Endothelial cell of umbilical vein (primary cell): ENCODE measurements at regions of chrX and their contacts with region 1.

Region 1: GRCh38 chrX:2696698-2697215 is 5.7 kb downstream of the CD99 start:
- DNase-seq: peak; percentile 96
- H3K4me3 ChIP-seq: peak overlapping the region in 1 of 3 experiments; percentile 49
- H3K27ac ChIP-seq: peak overlapping the region; percentile 87
- H3K4me1 ChIP-seq: peaks cover 61% of the 10 kb centered on the region
- H3K27me3 ChIP-seq: no peaks in the 10 kb centered on the region
- CTCF ChIP-seq: no peak
- POLR2A ChIP-seq: no peak

Region 2: DNA sequence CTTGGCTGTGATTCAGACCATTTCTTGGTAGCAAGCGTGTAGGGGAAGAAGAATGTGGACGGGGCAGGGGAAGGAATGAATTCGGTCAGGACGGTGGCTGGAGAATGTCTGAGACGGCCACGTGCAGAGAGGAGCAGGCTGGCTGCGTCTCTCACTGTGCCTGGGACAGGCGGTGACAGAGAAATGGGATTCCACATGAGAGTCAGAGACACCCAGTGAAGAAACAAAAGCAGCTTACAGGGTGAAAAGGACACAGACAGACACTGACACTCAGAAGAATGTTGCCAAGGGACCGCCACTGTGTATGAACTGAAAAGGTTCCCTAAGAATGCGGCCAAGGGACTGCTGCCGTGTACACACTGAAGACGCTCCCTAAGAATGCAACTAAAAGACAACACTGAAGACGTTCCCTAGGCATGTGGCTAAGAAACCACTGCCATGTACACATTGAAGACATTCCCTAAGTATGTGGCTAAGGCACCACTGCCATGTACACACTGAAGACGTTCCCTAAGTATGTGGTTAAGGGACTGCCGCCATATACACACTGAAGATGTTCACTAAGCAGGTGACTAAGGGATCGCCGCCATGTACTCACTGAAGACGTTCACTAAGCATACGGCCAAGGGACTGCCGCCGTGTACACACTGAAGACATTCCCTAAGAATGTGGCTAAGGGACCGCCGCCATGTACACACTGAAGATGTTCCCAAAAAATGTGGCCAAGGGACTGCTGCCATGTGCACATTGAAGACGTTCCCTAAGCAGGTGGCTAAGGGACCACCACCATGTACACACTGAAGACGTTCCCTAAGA is 245.0 kb before region 1 on chrX:
- CTCF ChIA-PET with region 1: no interaction called
- POLR2A ChIA-PET with region 1: no interaction called
- dilution Hi-C with region 1: no loop called
- intact Hi-C with region 1: no loop called
- DNase-seq: no peak
- H3K4me3 ChIP-seq: no peak overlapping the region
- H3K27ac ChIP-seq: no peak overlapping the region
- H3K4me1 ChIP-seq: no peaks in the 10 kb centered on the region
- H3K27me3 ChIP-seq: no peaks in the 10 kb centered on the region
- CTCF ChIP-seq: no peak
- POLR2A ChIP-seq: no peak

Region 3: GRCh38 chrX:2614911-2615310 is 81.8 kb before region 1 on chrX:
- CTCF ChIA-PET with region 1: no interaction called
- POLR2A ChIA-PET with region 1: no interaction called
- dilution Hi-C with region 1: no loop called
- intact Hi-C with region 1: loop called (anchors 2 kb)
- DNase-seq: peak; percentile 87
- H3K4me3 ChIP-seq: no peak overlapping the region
- H3K27ac ChIP-seq: peak overlapping the region; percentile 77
- H3K4me1 ChIP-seq: peaks cover 40% of the 10 kb centered on the region
- H3K27me3 ChIP-seq: no peaks in the 10 kb centered on the region
- CTCF ChIP-seq: peak; percentile 36 to 49
- POLR2A ChIP-seq: no peak

Region 4: DNA sequence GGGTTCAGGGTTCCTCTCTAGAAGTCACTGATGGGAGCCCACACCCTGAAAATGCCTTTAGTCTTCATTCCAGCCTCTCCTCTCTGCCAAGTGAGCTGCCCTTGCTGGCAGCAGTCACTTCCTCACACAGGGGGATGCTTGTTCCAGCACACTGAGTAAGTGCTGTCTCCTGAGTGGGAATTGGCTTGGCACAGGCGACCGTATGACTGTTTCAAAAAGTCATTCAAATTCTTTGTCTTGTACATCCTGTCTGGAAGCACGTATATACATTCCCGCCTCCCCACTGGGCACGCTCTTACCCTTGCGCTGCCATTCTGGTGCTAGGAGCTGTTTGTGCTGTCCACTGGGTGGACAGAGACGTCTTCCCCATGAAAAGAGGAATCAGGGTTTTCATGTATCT is 45.9 kb before region 1 on chrX:
- CTCF ChIA-PET with region 1: no interaction called
- POLR2A ChIA-PET with region 1: no interaction called
- dilution Hi-C with region 1: no loop called
- intact Hi-C with region 1: loop called (anchors 1 kb)
- DNase-seq: peak; percentile 86
- H3K4me3 ChIP-seq: no peak overlapping the region
- H3K27ac ChIP-seq: peak overlapping the region; percentile 63
- H3K4me1 ChIP-seq: peaks cover 10% of the 10 kb centered on the region
- H3K27me3 ChIP-seq: no peaks in the 10 kb centered on the region
- CTCF ChIP-seq: no peak
- POLR2A ChIP-seq: no peak

Region 5: DNA sequence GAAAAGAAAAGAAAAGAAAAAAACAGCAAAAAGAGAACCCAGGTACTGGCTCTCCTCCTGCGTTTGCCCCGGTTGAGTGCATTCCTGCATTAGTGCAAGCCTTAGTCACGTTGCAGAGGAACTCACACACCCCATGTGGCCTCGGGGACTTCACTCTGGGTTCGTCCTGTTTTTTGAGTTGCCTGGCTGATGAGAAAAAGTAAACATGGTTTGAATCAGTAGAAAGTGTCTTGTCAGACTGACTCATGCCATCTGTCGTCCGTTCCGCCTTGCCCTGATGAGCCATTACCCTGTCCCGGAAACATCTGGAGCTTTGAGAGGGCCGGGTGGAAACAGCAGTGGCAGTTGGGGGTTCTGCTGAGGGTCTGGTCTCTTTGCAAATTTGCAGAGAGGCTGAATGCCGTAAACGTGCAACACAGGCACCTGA is 10.6 kb after region 1 on chrX:
- CTCF ChIA-PET with region 1: no interaction called
- POLR2A ChIA-PET with region 1: no interaction called
- dilution Hi-C with region 1: no loop called
- intact Hi-C with region 1: loop called (anchors 1 kb)
- DNase-seq: peak; percentile 60
- H3K4me3 ChIP-seq: no peak overlapping the region
- H3K27ac ChIP-seq: peak overlapping the region; percentile 76
- H3K4me1 ChIP-seq: peaks cover 74% of the 10 kb centered on the region
- H3K27me3 ChIP-seq: no peaks in the 10 kb centered on the region
- CTCF ChIP-seq: no peak
- POLR2A ChIP-seq: no peak